ENCODE measurements at regions of chr11 and their contacts with region 1.

Region 1: DNA sequence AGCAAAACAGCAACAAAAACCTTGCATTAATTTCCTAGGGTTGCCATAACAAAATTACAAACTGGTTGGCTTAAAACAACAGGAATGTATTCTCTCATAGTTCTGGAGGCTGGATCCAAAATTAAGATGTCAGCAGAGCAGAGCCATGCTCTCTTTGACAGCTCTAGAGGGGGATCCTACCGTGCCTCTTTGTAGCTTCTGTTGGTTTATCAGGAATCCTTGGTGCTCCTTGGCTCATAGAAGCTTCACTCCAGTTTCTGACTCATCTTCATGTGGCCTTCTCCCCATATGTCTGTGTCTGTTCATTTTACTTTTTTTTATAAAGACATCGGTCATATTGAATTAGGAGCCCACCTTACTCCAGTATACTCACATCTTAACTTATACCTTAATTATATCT is 90.5 kb upstream of the POU2AF2 start:
- DNase-seq: no peak
- H3K4me3 ChIP-seq: no peak overlapping the region
- H3K27ac ChIP-seq: no peak overlapping the region
- H3K4me1 ChIP-seq: peaks cover 5% of the 10 kb centered on the region
- CTCF ChIP-seq: no peak

Region 2: DNA sequence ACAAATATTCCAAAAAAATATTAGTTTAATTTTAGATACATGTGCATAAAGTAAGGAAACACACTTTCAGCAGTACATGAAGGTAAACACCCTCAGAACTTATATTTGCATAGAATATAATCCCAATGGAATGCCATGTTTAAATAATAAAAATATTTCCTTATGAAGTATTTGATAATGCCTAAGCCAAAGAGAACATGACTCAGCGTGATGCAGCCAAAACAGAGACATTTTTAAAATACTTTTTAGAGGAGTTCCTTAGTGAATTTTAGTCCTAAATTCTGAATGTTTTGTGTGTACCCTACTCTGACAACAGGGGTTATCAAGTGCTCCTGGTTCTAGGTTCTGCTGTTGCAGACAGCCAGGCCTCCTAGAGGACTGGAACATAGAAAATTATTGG is 51.5 kb after region 1 on chr11:
- CTCF ChIA-PET with region 1: no interaction called
- POLR2A ChIA-PET with region 1: no interaction called
- intact Hi-C with region 1: loop called (anchors 5 kb)
- DNase-seq: no peak
- H3K4me3 ChIP-seq: no peak overlapping the region
- H3K27ac ChIP-seq: no peak overlapping the region
- H3K4me1 ChIP-seq: no peaks in the 10 kb centered on the region
- CTCF ChIP-seq: no peak

Measured in OCI-LY7 (cell line).